Dendritic cell treated with granulocyte-macrophage colony-stimulating factor and Interleukin-4, amounts not matched to agents 40 ng/mL and 50 ng/mL, for 4 days (primary cell): ENCODE measurements at regions of chr3 and their contacts with region 1.

Region 1: DNA sequence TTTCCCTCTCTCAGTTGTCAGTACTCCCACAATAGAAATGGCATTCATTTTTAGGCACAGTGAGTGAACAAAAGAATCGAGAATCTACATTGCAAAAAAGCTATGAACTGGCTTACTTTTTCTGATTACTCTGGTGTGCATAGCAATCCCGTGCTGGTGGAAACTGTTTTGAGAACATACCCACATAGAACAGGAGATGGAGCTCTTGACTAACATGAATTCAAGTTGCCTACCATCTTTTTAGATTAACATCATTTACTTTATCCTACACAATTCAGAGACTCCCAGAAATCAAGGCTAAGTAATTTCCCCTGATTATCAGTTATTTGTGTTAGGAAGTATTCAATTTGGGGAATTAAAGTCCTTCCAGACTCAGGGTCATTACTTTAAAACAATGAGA is 326.6 kb downstream of the ARPP21 start:
- H3K4me3 Mint-ChIP-seq: no peak overlapping the region
- H3K27ac Mint-ChIP-seq: no peak overlapping the region
- H3K4me1 Mint-ChIP-seq: no peaks in the 10 kb centered on the region
- H3K27me3 Mint-ChIP-seq: no peaks in the 10 kb centered on the region

Region 2: DNA sequence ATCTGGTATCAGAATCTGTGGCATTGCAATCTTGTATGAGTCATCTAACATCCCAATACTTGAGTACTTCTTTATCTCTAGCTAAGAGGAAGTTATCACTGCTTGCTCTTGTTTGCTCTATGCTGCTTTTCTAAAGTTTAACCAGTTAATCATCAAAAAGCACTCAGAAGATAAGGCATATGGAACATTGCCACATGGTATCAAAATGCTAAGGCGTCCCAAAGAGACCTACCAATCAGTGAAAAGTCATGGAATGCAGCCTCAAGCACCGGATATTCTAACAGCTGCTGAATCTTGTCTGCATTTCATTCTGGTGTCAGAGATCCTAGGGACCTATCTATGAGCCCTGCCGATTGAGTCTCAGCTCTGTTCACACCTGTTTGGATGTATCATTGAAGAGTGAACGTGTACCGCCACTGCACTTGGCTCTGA is 133.8 kb before region 1 on chr3:
- intact Hi-C with region 1: no loop called
- H3K4me3 Mint-ChIP-seq: no peak overlapping the region
- H3K27ac Mint-ChIP-seq: no peak overlapping the region
- H3K4me1 Mint-ChIP-seq: no peaks in the 10 kb centered on the region
- H3K27me3 Mint-ChIP-seq: no peaks in the 10 kb centered on the region

Region 3: GRCh38 chr3:36219398-36219797 is 253.5 kb after region 1 on chr3:
- intact Hi-C with region 1: no loop called
- H3K4me3 Mint-ChIP-seq: no peak overlapping the region
- H3K27ac Mint-ChIP-seq: no peak overlapping the region
- H3K4me1 Mint-ChIP-seq: no peaks in the 10 kb centered on the region
- H3K27me3 Mint-ChIP-seq: no peaks in the 10 kb centered on the region

Region 4: DNA sequence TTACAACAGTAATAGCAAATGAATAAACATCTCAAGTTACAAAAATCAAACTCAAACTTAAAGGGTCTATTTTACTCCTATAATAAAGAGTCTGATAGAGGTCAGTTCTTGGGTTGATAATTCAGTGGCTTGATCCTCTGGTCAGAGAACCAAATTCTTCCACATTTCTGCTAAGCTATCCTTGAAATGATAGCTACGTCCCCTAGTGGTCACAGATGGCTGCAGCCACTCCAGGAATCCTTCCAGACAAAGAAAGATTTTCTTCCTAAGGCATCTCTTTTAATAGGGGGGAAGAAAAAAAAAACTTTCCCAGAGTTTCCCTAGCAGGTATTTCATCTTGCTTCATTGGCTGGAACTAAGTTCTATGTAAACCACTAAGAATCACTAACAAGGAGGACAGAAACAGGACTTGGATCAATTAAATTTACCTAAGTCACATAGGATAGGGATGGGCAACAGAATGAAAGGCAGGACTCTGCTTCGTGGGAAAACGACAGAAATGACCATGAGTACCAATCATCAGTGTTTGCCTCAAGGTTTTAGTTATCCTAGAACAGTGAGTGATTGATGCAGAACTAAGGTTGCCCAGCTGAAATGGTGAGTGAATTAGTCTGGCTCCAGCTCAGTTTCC is 575.1 kb after region 1 on chr3:
- intact Hi-C with region 1: loop called (anchors 5 kb)
- H3K4me3 Mint-ChIP-seq: no peak overlapping the region
- H3K27ac Mint-ChIP-seq: no peak overlapping the region
- H3K4me1 Mint-ChIP-seq: peaks cover 31% of the 10 kb centered on the region
- H3K27me3 Mint-ChIP-seq: peaks cover 4% of the 10 kb centered on the region

Region 5: DNA sequence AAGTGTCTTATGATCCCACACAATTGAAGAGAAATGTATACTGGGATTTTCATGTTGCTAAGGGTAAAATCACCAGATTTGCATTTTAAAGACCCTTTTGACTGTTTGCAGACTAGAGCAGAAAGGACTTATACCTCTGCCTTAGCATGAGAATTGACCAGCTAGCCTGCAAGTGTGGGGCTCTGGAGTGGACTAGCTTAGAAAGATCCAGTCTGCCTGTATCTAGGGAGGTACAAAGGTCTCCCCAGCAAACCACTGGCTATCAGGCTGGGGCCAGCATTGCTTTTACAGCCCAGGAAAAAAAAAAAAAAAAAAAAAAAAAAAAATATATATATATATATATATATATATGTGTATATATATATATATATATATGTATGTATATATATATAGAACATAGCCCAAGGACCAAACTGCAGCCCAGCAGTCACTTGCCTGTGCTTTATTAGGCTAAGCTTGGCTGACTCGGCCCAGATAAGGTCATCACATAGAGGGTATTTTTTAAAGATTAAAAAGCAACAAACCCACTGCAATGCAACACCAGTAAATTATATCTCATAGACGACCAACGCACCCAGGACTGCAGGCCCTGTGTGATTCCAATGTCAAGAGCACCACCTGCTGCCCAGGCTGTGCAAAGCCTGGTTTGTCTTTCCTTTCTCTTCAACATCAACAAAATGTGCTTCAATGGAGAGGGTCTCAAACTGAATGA is 734.8 kb after region 1 on chr3:
- intact Hi-C with region 1: loop called (anchors 1 kb)
- H3K4me3 Mint-ChIP-seq: no peak overlapping the region
- H3K27ac Mint-ChIP-seq: no peak overlapping the region
- H3K4me1 Mint-ChIP-seq: no peaks in the 10 kb centered on the region
- H3K27me3 Mint-ChIP-seq: no peaks in the 10 kb centered on the region